ENCODE measurements at regions of chr7 and their contacts with region 1.

Region 1: GRCh38 chr7:150994141-150994964 is 3.5 kb downstream of the NOS3 start:
- DNase-seq: peak; percentile 54
- ATAC-seq: peak; percentile 80
- H3K4me3 Mint-ChIP-seq: peak overlapping the region; percentile 27
- H3K27ac Mint-ChIP-seq: peak overlapping the region; percentile 52
- H3K4me1 Mint-ChIP-seq: peaks cover 29% of the 10 kb centered on the region
- H3K27me3 Mint-ChIP-seq: peaks cover 12% of the 10 kb centered on the region

Region 2: DNA sequence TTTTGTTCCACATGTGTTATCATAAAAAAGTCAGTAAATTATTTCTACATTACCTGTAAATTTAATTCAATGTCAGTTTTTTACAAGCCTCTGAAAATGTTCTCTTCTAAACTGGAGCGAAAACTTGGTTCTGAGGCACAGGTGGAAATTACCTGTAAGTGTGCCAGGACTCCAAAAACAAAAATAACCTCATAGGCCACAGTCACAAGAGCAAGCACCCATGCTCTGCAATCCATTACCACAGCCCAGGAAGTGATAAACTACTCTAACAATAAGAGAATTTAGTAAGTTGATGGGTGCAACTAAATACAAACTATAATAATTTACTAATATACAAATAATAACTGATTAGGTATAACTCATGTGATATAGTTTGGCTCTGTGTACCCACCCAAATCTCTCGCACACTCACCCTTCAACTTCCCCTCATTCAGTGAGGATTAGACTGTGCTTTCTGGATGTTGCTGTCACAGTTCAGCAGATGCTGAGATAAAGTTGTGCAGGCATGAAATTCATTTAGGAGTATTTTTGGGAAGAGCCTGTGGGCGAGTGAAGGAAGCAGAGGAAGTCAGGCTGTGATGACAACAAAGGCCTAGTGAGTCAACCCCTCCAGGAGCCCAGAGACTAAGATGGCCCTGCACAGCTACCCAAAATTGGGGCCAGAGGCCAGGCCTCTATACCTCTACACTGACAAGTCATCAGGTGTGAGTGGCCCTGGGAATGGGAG is 345.8 kb before region 1 on chr7:
- CTCF ChIA-PET with region 1: no interaction called
- POLR2A ChIA-PET with region 1: no interaction called
- DNase-seq: no peak
- ATAC-seq: no peak
- H3K4me3 Mint-ChIP-seq: no peak overlapping the region
- H3K27ac Mint-ChIP-seq: peak overlapping the region; percentile 76
- H3K4me1 Mint-ChIP-seq: peaks cover 30% of the 10 kb centered on the region
- H3K27me3 Mint-ChIP-seq: no peaks in the 10 kb centered on the region

Region 3: DNA sequence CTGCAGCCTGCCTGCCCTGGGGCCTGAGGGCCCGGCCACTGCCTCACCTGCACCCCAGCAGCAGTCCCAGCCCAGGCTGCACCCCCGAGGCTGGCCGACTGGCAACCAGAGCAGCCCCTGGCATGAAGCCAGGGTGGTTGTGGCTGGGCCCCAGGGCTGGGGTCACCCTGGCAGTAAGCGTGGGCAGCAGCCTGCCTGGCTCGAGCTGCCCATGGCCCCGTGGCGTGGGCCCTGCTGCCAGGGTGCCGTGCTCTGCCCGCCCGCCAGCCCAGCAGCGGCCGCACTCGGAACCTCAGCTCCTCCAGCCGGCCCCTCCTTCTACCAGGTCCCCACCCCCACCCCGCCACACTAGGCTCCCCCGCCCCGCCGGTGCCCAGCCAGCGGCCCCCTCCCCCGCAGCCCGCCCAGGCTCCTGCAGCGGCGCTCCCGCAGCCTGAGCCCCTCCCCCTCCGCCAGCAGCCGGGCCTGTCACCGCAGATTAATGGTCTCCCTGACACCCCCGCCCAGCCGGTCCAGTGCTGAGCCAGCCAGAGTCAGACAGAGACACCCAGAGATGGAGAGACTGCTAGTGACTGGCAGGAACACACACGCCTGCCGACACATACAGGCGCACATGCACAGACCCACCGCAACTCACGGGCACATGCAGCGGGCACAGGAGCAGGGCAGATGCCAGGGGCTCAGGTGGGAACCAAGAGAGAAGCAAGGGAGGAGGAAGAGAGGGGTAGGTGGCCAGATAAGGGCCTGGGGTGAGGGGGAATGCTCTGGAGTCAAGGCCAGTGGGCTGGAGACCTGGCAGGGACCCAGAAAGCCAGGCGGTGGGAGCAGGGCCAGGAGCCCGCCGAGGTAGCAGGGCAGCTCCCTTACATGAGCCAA is 38.6 kb before region 1 on chr7:
- CTCF ChIA-PET with region 1: no interaction called
- POLR2A ChIA-PET with region 1: no interaction called
- DNase-seq: no peak
- ATAC-seq: no peak
- H3K4me3 Mint-ChIP-seq: no peak overlapping the region
- H3K27ac Mint-ChIP-seq: no peak overlapping the region
- H3K4me1 Mint-ChIP-seq: no peaks in the 10 kb centered on the region
- H3K27me3 Mint-ChIP-seq: peaks cover 35% of the 10 kb centered on the region

Region 4: GRCh38 chr7:151008511-151009323 is 14.4 kb after region 1 on chr7:
- CTCF ChIA-PET with region 1: interaction called, 13 read pairs
- POLR2A ChIA-PET with region 1: interaction called, 3 read pairs
- DNase-seq: peak; percentile 83
- ATAC-seq: peak; percentile 62
- H3K4me3 Mint-ChIP-seq: peak overlapping the region; percentile 76
- H3K27ac Mint-ChIP-seq: peak overlapping the region; percentile 83
- H3K4me1 Mint-ChIP-seq: peaks cover 62% of the 10 kb centered on the region
- H3K27me3 Mint-ChIP-seq: no peaks in the 10 kb centered on the region

Region 5: DNA sequence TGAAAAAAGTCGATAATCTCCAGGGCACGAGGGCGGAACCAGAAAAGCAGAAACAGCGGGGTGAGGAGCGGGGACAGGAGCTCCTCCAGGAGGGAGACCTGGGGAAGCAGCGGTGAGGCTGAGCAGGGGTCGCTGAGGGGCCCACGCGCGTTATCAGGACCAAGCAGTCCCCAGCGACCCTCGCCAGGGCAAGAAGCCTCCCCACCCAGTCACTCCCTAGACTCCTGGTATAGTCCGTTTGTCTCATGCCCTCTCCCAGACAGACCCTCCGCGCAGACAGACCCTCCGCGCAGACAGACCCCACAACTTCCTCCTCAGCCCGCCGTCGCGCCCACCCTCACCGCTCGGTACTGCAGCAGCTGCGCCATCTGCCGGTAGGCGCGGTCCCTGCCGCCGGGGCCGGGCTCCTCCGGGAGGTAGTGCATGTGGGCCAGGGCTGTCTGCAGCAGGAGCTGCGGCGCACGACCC is 23.6 kb after region 1 on chr7:
- CTCF ChIA-PET with region 1: interaction called, 11 read pairs
- POLR2A ChIA-PET with region 1: no interaction called
- DNase-seq: peak; percentile 83
- ATAC-seq: peak; percentile 62
- H3K4me3 Mint-ChIP-seq: peak overlapping the region; percentile 69
- H3K27ac Mint-ChIP-seq: peak overlapping the region; percentile 65
- H3K4me1 Mint-ChIP-seq: peaks cover 59% of the 10 kb centered on the region
- H3K27me3 Mint-ChIP-seq: peaks cover 28% of the 10 kb centered on the region